RWPE1 (cell line): ENCODE measurements at regions of chr20 and their contacts with region 1.

Region 1: GRCh38 chr20:49846206-49846807 is 33.7 kb downstream of the SLC9A8 start:
- DNase-seq: peak; percentile 41
- H3K27ac ChIP-seq: no peak overlapping the region
- CTCF ChIP-seq: peak; percentile 62

Region 2: GRCh38 chr20:49610701-49611538 is 235.4 kb before region 1 on chr20:
- CTCF ChIA-PET with region 1: interaction called, 21 read pairs
- POLR2A ChIA-PET with region 1: no interaction called
- DNase-seq: peak; percentile 93
- H3K27ac ChIP-seq: no peak overlapping the region
- CTCF ChIP-seq: peak; percentile 100

Region 3: GRCh38 chr20:49832632-49833327 is 13.5 kb before region 1 on chr20:
- CTCF ChIA-PET with region 1: interaction called, 18 read pairs
- POLR2A ChIA-PET with region 1: no interaction called
- DNase-seq: peak; percentile 55
- H3K27ac ChIP-seq: peak overlapping the region; percentile 52
- CTCF ChIP-seq: no peak

Region 4: DNA sequence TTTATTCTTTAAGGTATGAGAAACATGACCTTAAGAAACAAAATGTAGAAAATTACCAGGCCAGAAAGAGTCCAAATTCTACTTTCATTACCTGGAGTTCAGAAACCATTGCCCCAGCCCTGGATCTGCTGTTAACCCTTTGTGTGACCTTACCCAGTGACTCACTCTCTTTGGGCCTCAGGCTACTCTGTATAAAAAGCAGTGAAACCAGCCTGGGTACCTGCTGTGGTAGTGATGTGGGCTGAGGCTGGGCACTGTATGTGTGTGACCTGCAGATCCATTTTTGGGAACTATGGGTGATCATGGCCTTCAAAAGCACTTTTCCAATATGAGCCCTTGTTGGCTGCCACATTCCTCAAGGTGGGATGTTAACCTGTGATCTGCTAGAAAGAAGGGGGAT is 13.5 kb after region 1 on chr20:
- CTCF ChIA-PET with region 1: interaction called, 6 read pairs
- POLR2A ChIA-PET with region 1: interaction called, 14 read pairs
- DNase-seq: peak; percentile 97
- H3K27ac ChIP-seq: no peak overlapping the region
- CTCF ChIP-seq: no peak